Transverse colon (tissue), 4 donors: ENCODE measurements at regions of chr11 and their contacts with region 1.

Region 1: DNA sequence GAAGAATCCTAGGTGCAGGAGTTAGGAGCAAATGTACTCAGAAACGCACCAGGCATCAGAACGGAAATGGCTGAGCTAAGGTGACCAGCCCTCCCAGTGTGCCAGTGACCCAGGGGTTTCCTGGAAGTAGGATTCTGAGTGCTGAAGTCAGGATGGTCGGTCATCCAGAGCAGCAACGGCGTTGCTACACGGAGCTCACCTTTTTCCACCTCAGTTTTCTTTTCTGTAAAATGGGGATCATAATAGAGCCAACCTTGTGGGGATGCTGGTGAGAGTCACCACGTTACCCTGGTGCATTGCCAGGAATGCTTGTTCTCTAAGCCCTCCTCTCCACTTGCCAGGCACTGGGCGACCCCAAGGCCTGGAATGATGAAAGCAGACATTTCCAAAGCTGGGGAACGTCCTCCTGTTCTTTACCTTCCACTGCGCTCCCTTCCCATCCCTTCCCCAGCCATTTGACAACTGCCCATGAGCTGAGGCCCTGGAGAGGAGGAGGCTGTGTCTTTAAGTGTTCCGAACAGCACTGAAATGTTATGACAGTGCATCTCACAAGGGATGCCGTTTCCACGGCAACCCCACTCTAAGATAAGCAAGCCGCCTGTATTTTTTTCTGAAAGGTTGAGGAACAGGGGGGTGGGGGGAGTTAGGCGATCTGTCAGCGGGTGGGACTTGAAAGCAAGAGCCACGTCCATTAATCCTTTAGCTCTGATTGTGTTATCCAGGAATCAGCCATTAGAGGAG is 66.8 kb downstream of the TSPAN18 start:
- DNase-seq: no peak
- H3K4me3 ChIP-seq: no peak overlapping the region
- H3K27ac ChIP-seq: no peak overlapping the region
- H3K4me1 ChIP-seq: no peaks in the 10 kb centered on the region
- H3K27me3 ChIP-seq: no peaks in the 10 kb centered on the region
- CTCF ChIP-seq: no peak
- EP300 ChIP-seq: no peak
- POLR2A ChIP-seq: no peak

Region 2: GRCh38 chr11:44269369-44270351 is 523.9 kb before region 1 on chr11:
- in situ Hi-C with region 1: no loop called
- intact Hi-C with region 1: no loop called
- DNase-seq: no peak
- H3K4me3 ChIP-seq: no peak overlapping the region
- H3K27ac ChIP-seq: no peak overlapping the region
- H3K4me1 ChIP-seq: no peaks in the 10 kb centered on the region
- H3K27me3 ChIP-seq: peaks cover 9% of the 10 kb centered on the region
- CTCF ChIP-seq: no peak
- EP300 ChIP-seq: no peak
- POLR2A ChIP-seq: no peak

Region 3: GRCh38 chr11:44388828-44389657 is 404.5 kb before region 1 on chr11:
- in situ Hi-C with region 1: no loop called
- intact Hi-C with region 1: loop called (anchors 10 kb)
- DNase-seq: no peak
- H3K4me3 ChIP-seq: no peak overlapping the region
- H3K27ac ChIP-seq: no peak overlapping the region
- H3K4me1 ChIP-seq: peaks cover 0 to 4% (median 0%) of the 10 kb centered on the region in 4 donors
- H3K27me3 ChIP-seq: peaks cover 7% of the 10 kb centered on the region
- CTCF ChIP-seq: no peak
- EP300 ChIP-seq: no peak
- POLR2A ChIP-seq: no peak

Region 4: DNA sequence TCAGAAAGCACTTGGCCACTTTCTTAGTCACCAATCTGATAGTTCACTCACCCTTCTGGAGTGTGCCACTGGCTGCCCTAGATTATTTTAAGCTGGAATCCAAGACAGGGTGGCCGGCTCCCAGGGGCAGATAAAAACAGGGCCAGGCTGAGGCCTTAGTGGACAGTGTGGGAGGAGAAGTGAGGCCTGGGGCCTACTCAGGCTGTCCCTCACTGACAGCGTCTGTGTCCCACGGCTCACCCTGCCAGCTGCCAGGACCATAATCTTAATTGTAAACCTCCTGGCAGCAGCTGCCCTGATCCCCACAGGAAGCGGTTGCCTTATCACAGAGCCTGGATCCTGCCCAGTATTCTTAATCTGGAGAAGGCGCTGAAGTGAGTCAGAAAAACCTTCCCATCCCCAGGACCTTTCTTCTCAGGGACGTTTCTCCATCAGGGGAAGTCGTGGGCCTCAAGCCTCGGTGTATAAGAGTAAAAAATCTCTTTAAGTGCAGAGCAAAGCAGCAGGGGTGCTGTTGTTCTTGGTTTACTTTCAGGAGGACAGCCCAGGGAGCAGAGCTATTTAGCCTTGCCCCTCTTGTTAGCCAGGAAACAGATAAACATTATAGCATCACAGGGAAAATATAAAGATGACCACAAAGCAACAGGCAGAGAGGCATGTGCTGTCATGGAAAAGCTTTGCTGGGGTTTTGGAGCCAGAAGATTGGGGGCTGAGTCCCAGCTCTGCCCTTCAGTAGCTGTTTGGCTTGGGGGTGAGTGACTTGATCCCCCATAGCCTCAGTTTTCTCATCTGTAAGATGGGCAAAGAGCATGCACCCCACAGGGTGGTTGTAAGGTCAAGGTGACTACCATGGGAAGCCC is 27.2 kb before region 1 on chr11:
- in situ Hi-C with region 1: no loop called
- intact Hi-C with region 1: no loop called
- DNase-seq: no peak
- H3K4me3 ChIP-seq: no peak overlapping the region
- H3K27ac ChIP-seq: peak overlapping the region; percentile 74 to 84 (median 80)
- H3K4me1 ChIP-seq: peaks cover 4 to 30% (median 17%) of the 10 kb centered on the region in 4 donors
- H3K27me3 ChIP-seq: no peaks in the 10 kb centered on the region
- CTCF ChIP-seq: no peak
- EP300 ChIP-seq: no peak
- POLR2A ChIP-seq: no peak

Region 5: DNA sequence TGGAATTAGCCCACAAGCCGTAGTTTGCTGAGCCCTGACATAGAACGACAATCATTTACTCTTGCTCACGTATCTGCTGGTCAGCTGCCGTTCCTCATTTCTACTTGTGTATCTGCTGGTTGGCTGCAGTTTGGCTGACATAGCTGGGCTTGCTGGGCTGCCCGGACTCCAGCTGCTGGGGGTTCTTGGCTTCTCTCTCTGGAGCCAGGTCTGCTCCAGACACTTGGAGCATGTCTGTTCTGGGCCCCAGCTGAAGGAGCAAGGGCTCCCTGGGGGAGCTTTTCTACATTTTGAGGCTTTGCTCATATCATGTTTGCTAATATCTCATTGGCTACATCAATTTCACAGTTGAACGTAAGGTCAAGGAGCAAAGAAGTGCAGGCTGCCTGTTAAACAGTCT is 400.2 kb after region 1 on chr11:
- in situ Hi-C with region 1: no loop called
- intact Hi-C with region 1: loop called (anchors 10 kb)
- DNase-seq: no peak
- H3K4me3 ChIP-seq: no peak overlapping the region
- H3K27ac ChIP-seq: peak overlapping the region in 2 of 4 donors; percentile 20 to 38
- H3K4me1 ChIP-seq: no peaks in the 10 kb centered on the region
- H3K27me3 ChIP-seq: no peaks in the 10 kb centered on the region
- CTCF ChIP-seq: no peak
- EP300 ChIP-seq: no peak
- POLR2A ChIP-seq: no peak